ENCODE measurements at regions of chr2 and their contacts with region 1.

Region 1: GRCh38 chr2:106104332-106105062 is 89.6 kb downstream of the UXS1 start:
- DNase-seq: peak in 1 of 3 donors; percentile 64
- ATAC-seq: peak; percentile 82 to 90 (median 90)
- H3K4me3 ChIP-seq: no peak overlapping the region
- H3K27ac ChIP-seq: no peak overlapping the region
- H3K4me1 ChIP-seq: no peaks in the 10 kb centered on the region
- H3K27me3 ChIP-seq: no peaks in the 10 kb centered on the region
- CTCF ChIP-seq: peak; percentile 92 to 98 (median 96)
- POLR2A ChIP-seq: no peak

Region 2: GRCh38 chr2:106038601-106039375 is 65.7 kb before region 1 on chr2:
- intact Hi-C with region 1: no loop called
- DNase-seq: no peak
- ATAC-seq: no peak
- H3K4me3 ChIP-seq: no peak overlapping the region
- H3K27ac ChIP-seq: no peak overlapping the region
- H3K4me1 ChIP-seq: peaks cover 0 to 7% (median 0%) of the 10 kb centered on the region in 4 donors
- H3K27me3 ChIP-seq: no peaks in the 10 kb centered on the region
- CTCF ChIP-seq: no peak
- POLR2A ChIP-seq: no peak

Region 3: GRCh38 chr2:106542811-106543259 is 438.3 kb after region 1 on chr2:
- intact Hi-C with region 1: loop called in 1 of 2 experiments (anchors 5 kb)
- DNase-seq: peak; percentile 63 to 70 (median 67)
- ATAC-seq: peak; percentile 95 to 98 (median 97)
- H3K4me3 ChIP-seq: peak overlapping the region in 2 of 3 donors; percentile 27 to 32
- H3K27ac ChIP-seq: no peak overlapping the region
- H3K4me1 ChIP-seq: no peaks in the 10 kb centered on the region
- H3K27me3 ChIP-seq: no peaks in the 10 kb centered on the region
- CTCF ChIP-seq: peak; percentile 69 to 94 (median 92)
- POLR2A ChIP-seq: no peak